ENCODE measurements at regions of chr1 and their contacts with region 1.

Region 1: GRCh38 chr1:169461390-169462000 is 24.2 kb downstream of the SLC19A2 start:
- DNase-seq: no peak
- H3K4me3 Mint-ChIP-seq: peak overlapping the region; percentile 37
- H3K27ac Mint-ChIP-seq: peak overlapping the region; percentile 51
- H3K4me1 Mint-ChIP-seq: peaks cover 21% of the 10 kb centered on the region
- H3K27me3 Mint-ChIP-seq: peaks cover 3% of the 10 kb centered on the region

Region 2: DNA sequence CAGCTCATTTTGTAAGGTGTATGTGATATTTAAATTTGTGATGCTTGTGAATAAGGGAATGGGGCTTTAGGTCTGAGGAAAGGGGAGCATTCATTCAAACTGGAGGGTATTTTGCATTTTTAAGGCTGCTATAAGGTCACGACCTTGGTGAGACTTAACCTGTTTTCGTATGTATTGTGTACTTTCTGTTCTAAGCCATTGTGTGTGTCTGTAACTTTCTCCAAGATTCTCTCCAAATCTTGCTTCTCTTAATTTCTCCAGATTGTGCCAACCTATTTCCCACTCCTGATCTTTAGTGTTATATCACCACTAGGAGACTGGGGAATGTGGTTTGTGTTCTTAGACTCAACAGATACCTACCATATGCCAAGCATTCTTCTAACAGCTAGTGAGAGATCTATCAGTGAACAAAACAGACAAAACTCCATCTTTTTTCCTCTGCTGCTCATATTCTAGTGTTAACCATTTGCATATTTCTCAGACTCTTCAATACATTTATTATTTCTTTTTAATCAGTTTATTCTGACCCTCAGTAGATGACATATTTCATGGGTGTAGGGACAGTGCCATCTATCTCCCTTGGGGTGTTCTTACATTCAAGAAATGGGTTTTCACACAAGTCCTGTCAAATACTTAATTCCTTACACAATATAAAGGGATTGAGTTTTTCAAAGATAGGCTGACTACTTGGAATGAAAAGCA is 327.5 kb before region 1 on chr1:
- intact Hi-C with region 1: no loop called
- DNase-seq: no peak
- H3K4me3 Mint-ChIP-seq: no peak overlapping the region
- H3K27ac Mint-ChIP-seq: no peak overlapping the region
- H3K4me1 Mint-ChIP-seq: peaks cover 6% of the 10 kb centered on the region
- H3K27me3 Mint-ChIP-seq: peaks cover 4% of the 10 kb centered on the region

Region 3: DNA sequence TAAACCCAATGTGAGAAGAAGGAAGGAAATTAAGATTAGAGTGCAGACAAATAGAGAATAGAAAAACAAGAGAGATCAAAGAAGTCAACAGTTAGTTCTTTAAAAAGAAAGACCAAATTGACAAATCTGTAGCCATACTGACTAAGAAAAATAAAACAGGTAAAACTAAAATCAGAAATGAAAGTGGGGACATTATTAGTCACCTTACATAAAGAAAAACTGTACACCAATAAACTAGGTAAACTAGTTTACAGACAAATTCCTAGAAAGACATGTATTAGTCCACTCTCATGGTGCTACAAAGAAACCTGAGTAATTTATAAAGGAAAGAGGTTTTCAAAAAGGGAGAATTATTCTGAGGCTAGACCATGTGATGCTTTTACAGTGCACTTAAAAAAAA is 71.2 kb before region 1 on chr1:
- intact Hi-C with region 1: loop called (anchors 1 kb)
- DNase-seq: no peak
- H3K4me3 Mint-ChIP-seq: no peak overlapping the region
- H3K27ac Mint-ChIP-seq: peak overlapping the region; percentile 29
- H3K4me1 Mint-ChIP-seq: peaks cover 21% of the 10 kb centered on the region
- H3K27me3 Mint-ChIP-seq: no peaks in the 10 kb centered on the region

Region 4: DNA sequence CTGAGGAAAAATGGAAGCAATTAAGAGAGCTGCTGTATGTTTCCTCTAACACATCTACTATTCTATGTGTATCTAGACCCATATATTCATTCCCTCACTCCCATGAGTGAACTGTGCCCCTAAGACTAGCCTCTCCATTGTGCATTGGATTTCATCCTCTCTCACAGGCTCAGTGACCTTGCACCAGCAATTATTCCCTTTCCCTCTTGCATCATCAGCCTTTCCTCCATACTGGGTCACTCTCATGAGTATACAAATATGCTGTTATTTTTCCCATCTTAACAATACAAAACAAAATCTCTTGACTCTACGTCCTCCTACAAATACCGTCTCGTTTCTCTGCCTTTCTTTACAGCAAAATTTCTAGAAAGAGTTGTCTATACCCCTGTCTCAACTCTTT is 362.7 kb after region 1 on chr1:
- intact Hi-C with region 1: no loop called
- DNase-seq: no peak
- H3K4me3 Mint-ChIP-seq: no peak overlapping the region
- H3K27ac Mint-ChIP-seq: no peak overlapping the region
- H3K4me1 Mint-ChIP-seq: peaks cover 13% of the 10 kb centered on the region
- H3K27me3 Mint-ChIP-seq: no peaks in the 10 kb centered on the region

Measured in activated T-helper 1 cell treated with anti-CD3 and anti-CD28 coated beads, Interleukin-12 subunit alpha, Interleukin-12 subunit beta, Interleukin-2, Interleukin-4 antibody, amounts not matched to agents 30 ng/mL and 10 ng/mL and 1 ng/mL, durations not matched to agents 14 hours and 24 hours and 36 hours (primary cell).